Heart right ventricle (tissue), 16 donors: ENCODE measurements at regions of chr5 and their contacts with region 1.

Region 1: GRCh38 chr5:52787600-52788504 is at the starts of genes ITGA1 and PELO:
- DNase-seq: peak; percentile 72 to 77
- ATAC-seq: peak; percentile 79 to 96 (median 91)
- H3K4me3 ChIP-seq: peak within 1 kb of the TSS; percentile 45 to 80 (median 68)
- H3K27ac ChIP-seq: peak within 1 kb of the TSS; percentile 56 to 96 (median 90)
- H3K4me1 ChIP-seq: peaks cover 0 to 64% (median 14%) of the 10 kb centered on the region in 9 donors
- H3K27me3 ChIP-seq: peaks cover 0 to 21% (median 0%) of the 10 kb centered on the region in 7 donors
- CTCF ChIP-seq: peak in 8 of 9 donors; percentile 43 to 77 (median 53)
- total RNA-seq, gene ITGA1: 17.7 to 48.2 (median 25.4) TPM
- total RNA-seq, gene PELO: 14.7 to 28.1 (median 22.2) TPM

Region 2: GRCh38 chr5:52693280-52693679 is 94.6 kb before region 1 on chr5:
- intact Hi-C with region 1: loop called in 7 of 10 experiments (anchors 2 to 10 kb)
- DNase-seq: peak; percentile 31 to 58
- ATAC-seq: peak; percentile 57 to 88 (median 80)
- H3K4me3 ChIP-seq: no peak overlapping the region
- H3K27ac ChIP-seq: peak overlapping the region in 4 of 10 donors; percentile 5 to 73 (median 41)
- H3K4me1 ChIP-seq: peaks cover 0 to 64% (median 26%) of the 10 kb centered on the region in 9 donors
- H3K27me3 ChIP-seq: no peaks in the 10 kb centered on the region
- CTCF ChIP-seq: peak; percentile 51 to 88 (median 69)

Region 3: DNA sequence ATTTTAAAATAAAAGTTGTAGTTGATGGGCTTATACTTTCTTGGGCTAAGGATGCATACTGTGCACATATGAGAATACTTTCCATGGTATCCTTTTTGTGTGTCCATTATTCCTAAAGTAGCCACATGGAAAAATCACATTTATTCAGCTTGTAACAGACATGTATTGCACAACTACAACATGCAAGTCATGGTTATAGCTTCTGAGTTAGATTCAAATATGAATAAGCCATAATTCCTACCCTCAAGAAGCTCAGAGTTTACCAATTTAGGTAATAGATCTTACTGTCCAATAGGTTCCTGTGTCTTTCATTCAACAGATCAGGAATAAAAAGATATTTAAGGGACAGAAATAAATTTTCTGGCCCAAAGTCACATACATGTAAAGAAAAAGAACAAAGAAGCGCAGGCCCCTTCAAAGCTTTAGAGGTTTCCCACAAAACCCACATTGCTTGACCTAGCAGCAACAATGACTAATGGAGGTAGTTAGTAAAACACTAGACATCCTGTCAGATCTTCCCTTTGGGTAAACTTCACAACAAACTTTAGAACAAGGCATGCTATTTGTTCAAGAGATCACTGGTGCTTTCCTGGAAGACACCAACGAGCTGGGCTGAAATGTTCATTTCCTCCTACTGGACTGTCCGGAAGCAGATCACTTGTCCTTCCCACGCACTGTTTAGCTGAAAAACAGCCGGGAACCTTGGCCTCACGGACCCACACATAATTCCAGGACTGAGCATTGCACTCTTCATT is 78.5 kb before region 1 on chr5:
- intact Hi-C with region 1: loop called in 1 of 10 experiments (anchors 5 kb)
- DNase-seq: peak in 1 of 2 donors; percentile 33
- ATAC-seq: peak; percentile 53 to 82 (median 70)
- H3K4me3 ChIP-seq: no peak overlapping the region
- H3K27ac ChIP-seq: peak overlapping the region in 9 of 10 donors; percentile 28 to 80 (median 52)
- H3K4me1 ChIP-seq: peaks cover 0 to 61% (median 25%) of the 10 kb centered on the region in 9 donors
- H3K27me3 ChIP-seq: no peaks in the 10 kb centered on the region
- CTCF ChIP-seq: no peak

Region 4: GRCh38 chr5:52725065-52725746 is 62.6 kb before region 1 on chr5:
- intact Hi-C with region 1: loop called in 1 of 10 experiments (anchors 5 kb)
- DNase-seq: peak in 1 of 2 donors; percentile 12
- ATAC-seq: peak in 7 of 8 donors; percentile 45 to 72 (median 56)
- H3K4me3 ChIP-seq: no peak overlapping the region
- H3K27ac ChIP-seq: peak overlapping the region in 8 of 10 donors; percentile 15 to 79 (median 58)
- H3K4me1 ChIP-seq: peaks cover 0 to 45% (median 36%) of the 10 kb centered on the region in 9 donors
- H3K27me3 ChIP-seq: no peaks in the 10 kb centered on the region
- CTCF ChIP-seq: no peak

Region 5: DNA sequence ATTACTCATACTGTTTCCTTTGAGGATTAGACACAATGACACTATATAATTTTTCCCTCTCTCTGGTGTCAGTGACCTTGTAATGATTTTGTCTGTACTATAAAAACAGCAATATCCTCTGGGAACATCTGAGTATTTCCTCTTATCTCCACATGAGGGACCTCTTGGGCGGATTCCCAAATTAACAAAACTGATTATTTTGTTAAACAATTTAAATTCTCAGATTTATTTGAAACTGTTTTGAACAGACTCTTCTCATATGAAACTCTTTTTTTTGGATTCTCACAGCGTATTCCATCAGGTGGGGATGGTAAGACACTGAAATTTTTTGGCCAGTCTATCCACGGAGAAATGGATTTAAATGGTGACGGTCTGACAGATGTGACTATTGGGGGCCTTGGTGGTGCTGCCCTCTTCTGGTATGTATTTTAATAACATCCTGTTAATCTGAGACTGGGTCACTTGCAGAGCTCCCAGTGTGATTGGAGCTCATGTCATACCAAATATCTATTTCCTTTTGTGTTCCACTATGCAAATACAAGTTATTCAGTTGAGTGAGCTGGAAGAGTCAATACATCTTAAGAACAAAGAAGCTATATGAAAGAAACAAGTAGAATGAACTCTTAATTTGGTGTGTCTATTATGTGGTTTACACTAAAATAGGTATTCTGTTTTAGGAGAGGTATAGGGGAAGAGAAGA is 127.5 kb after region 1 on chr5:
- intact Hi-C with region 1: loop called (anchors 2 to 10 kb)
- DNase-seq: peak; percentile 8 to 70
- ATAC-seq: peak; percentile 76 to 95 (median 92)
- H3K4me3 ChIP-seq: peak overlapping the region in 6 of 10 donors; percentile 2 to 39 (median 24)
- H3K27ac ChIP-seq: peak overlapping the region in 6 of 10 donors; percentile 1 to 58 (median 28)
- H3K4me1 ChIP-seq: peaks cover 0 to 23% (median 7%) of the 10 kb centered on the region in 9 donors
- H3K27me3 ChIP-seq: no peaks in the 10 kb centered on the region
- CTCF ChIP-seq: peak; percentile 70 to 88 (median 80)

Region 6: GRCh38 chr5:53095931-53096525 is 308.2 kb after region 1 on chr5:
- intact Hi-C with region 1: loop called in 1 of 10 experiments (anchors 10 kb)
- DNase-seq: peak in 1 of 2 donors; percentile 69
- ATAC-seq: peak; percentile 47 to 88 (median 65)
- H3K4me3 ChIP-seq: no peak overlapping the region
- H3K27ac ChIP-seq: no peak overlapping the region
- H3K4me1 ChIP-seq: peaks cover 0 to 5% (median 0%) of the 10 kb centered on the region in 9 donors
- H3K27me3 ChIP-seq: no peaks in the 10 kb centered on the region
- CTCF ChIP-seq: peak; percentile 78 to 95 (median 87)